ENCODE measurements at regions of chr9 and their contacts with region 1.

Region 1: GRCh38 chr9:32526041-32526706 is at the start of gene RIGI:
- DNase-seq: peak; percentile 92
- H3K4me3 ChIP-seq: peak within 1 kb of the TSS; percentile 71 to 94 (median 75)
- H3K27ac ChIP-seq: peak within 1 kb of the TSS; percentile 80
- H3K4me1 ChIP-seq: peaks cover 15% of the 10 kb centered on the region
- H3K27me3 ChIP-seq: no peaks in the 10 kb centered on the region
- CTCF ChIP-seq: peak; percentile 35 to 61
- total RNA-seq, gene RIGI: 4.7 to 8.6 TPM

Region 2: GRCh38 chr9:32378993-32379729 is 147.0 kb before region 1 on chr9:
- CTCF ChIA-PET with region 1: interaction called, 23 read pairs
- dilution Hi-C with region 1: no loop called
- in situ Hi-C with region 1: no loop called
- intact Hi-C with region 1: loop called (anchors 1 kb)
- DNase-seq: peak; percentile 68
- H3K4me3 ChIP-seq: no peak overlapping the region
- H3K27ac ChIP-seq: no peak overlapping the region
- H3K4me1 ChIP-seq: peaks cover 7% of the 10 kb centered on the region
- H3K27me3 ChIP-seq: no peaks in the 10 kb centered on the region
- CTCF ChIP-seq: peak; percentile 82 to 85

Region 3: DNA sequence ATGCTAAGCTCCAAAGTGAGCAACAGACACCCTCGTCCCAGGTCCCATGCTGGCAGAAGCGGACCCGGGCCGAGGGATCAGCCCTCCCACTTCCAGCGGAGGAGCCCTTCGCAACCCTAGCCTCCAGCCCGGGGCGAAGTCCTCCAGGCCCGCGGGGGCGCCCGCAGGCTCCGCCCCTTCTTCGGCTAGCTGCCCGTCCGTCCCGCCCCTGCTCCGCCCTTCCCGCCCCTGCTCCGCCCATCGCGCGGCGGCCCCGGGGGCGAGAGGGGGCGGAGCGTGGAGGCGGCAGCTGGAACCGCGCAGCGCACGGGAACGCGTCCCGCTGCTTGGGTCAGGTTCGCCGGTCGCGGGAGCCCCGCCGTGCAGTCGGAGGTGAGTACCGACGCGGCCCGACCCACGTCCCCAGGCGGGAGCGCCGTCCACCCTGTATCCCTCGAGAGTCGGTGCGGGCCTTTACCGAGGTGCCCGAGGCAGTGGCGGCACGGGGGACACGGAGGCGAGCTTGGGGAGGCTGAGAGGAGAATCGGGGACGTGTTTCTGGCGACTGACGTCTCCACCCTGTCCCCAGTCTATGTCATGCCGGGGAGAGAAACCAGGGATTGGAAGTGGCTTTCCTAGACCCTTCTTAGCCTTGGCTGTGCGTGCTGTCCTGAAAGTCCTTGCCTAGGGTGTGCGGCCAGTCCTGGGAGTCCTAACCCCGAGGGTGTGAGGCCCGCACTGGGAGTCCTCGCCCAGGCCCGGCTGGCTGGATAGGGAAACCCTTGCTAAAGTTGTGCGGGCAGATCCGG is 141.6 kb before region 1 on chr9 and contains the start of gene ACO1:
- CTCF ChIA-PET with region 1: interaction called, 23 read pairs
- dilution Hi-C with region 1: no loop called
- in situ Hi-C with region 1: no loop called
- intact Hi-C with region 1: loop called (anchors 1 kb)
- DNase-seq: peak; percentile 83
- H3K4me3 ChIP-seq: peak within 1 kb of the TSS; percentile 79 to 98 (median 86)
- H3K27ac ChIP-seq: peak within 1 kb of the TSS; percentile 69
- H3K4me1 ChIP-seq: peaks cover 14% of the 10 kb centered on the region
- H3K27me3 ChIP-seq: no peaks in the 10 kb centered on the region
- CTCF ChIP-seq: no peak
- total RNA-seq, gene ACO1: 43.1 to 44.2 TPM

Region 4: DNA sequence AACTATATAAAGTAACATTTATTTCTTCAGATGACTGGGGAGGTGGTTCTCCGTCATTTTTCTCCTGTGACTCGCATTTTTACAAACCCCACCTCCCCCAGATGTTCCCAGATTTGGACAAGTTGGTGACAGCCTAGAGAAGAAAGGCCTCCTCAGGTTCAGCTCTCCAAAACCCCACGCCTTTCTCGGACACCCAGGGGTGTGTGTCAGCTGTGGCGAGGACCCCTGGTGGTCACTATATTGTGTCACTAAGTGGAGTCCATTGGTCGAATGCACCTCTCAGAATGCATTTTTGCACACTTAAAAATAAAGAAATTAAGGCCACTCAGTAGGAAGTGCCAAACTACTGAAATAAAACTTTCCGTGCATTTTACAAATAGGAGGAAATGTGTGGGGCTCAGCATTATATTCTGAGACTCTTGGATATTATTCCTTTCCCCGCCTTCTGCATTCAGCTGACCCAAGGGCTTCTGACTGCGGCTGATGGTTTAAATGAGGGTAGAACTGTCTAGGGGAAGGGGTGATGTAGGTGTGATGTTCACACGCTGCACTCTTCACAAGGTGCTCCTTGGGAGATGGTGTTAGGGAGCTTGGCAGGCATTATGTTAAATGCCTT is 94.1 kb before region 1 on chr9:
- CTCF ChIA-PET with region 1: no interaction called
- dilution Hi-C with region 1: no loop called
- in situ Hi-C with region 1: no loop called
- intact Hi-C with region 1: loop called (anchors 5 kb)
- DNase-seq: peak; percentile 4
- H3K4me3 ChIP-seq: no peak overlapping the region
- H3K27ac ChIP-seq: no peak overlapping the region
- H3K4me1 ChIP-seq: peaks cover 5% of the 10 kb centered on the region
- H3K27me3 ChIP-seq: no peaks in the 10 kb centered on the region
- CTCF ChIP-seq: peak; percentile 18 to 46

Region 5: GRCh38 chr9:32463500-32464293 is 62.5 kb before region 1 on chr9:
- CTCF ChIA-PET with region 1: no interaction called
- dilution Hi-C with region 1: no loop called
- in situ Hi-C with region 1: no loop called
- intact Hi-C with region 1: loop called (anchors 10 kb)
- DNase-seq: no peak
- H3K4me3 ChIP-seq: no peak overlapping the region
- H3K27ac ChIP-seq: no peak overlapping the region
- H3K4me1 ChIP-seq: no peaks in the 10 kb centered on the region
- H3K27me3 ChIP-seq: no peaks in the 10 kb centered on the region
- CTCF ChIP-seq: no peak

Region 6: DNA sequence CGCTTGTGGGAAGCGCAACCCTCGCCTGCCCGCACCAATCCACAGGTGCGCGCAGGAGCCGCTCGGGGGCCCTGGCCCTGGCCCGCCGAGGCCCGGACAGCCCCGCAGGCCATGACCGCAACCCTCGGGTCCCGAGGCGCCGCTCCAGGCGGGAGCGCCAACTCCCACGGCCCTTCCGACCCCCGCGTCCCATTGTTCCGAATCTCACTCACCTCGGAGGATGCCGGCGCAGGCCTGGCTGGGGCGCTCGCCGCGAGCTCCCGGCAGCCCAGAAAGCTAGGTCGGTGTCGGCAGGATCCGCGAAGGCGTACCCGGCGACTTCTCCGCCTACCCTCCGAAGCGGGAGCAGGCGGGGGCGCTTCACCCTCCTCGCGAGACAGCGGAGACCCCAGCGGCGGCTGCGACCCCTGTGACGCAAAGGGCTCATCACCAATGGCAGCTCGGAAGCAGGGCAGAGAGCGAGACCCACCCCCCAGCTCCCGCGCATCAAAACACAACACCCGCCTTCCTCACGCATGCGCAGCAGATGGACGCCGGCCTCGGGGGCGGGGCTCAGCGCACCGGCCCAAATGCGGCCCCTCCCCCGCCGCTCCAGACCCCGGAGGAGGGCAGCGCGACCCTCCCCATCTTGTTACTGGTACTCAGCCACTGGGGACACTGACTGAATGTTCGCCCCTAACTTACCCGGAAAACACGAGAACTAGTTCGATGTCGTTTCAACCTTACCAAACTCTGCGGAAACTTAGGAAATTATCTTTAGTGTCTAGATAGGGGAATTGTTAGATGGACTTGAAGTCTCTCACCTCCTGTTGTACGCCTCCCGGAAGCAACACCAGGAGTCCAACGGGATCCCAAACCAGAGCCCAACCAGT is 24.6 kb after region 1 on chr9:
- CTCF ChIA-PET with region 1: no interaction called
- dilution Hi-C with region 1: no loop called
- in situ Hi-C with region 1: no loop called
- intact Hi-C with region 1: loop called (anchors 2 kb)
- DNase-seq: peak; percentile 77
- H3K4me3 ChIP-seq: peak overlapping the region; percentile 85 to 99 (median 91)
- H3K27ac ChIP-seq: peak overlapping the region; percentile 96
- H3K4me1 ChIP-seq: peaks cover 9% of the 10 kb centered on the region
- H3K27me3 ChIP-seq: no peaks in the 10 kb centered on the region
- CTCF ChIP-seq: peak in 1 of 2 donors; percentile 15

Measured in mammary epithelial cell (primary cell).